Naive thymus-derived CD4-positive, alpha-beta T cell (primary cell): ENCODE measurements at regions of chr2 and their contacts with region 1.

Region 1: DNA sequence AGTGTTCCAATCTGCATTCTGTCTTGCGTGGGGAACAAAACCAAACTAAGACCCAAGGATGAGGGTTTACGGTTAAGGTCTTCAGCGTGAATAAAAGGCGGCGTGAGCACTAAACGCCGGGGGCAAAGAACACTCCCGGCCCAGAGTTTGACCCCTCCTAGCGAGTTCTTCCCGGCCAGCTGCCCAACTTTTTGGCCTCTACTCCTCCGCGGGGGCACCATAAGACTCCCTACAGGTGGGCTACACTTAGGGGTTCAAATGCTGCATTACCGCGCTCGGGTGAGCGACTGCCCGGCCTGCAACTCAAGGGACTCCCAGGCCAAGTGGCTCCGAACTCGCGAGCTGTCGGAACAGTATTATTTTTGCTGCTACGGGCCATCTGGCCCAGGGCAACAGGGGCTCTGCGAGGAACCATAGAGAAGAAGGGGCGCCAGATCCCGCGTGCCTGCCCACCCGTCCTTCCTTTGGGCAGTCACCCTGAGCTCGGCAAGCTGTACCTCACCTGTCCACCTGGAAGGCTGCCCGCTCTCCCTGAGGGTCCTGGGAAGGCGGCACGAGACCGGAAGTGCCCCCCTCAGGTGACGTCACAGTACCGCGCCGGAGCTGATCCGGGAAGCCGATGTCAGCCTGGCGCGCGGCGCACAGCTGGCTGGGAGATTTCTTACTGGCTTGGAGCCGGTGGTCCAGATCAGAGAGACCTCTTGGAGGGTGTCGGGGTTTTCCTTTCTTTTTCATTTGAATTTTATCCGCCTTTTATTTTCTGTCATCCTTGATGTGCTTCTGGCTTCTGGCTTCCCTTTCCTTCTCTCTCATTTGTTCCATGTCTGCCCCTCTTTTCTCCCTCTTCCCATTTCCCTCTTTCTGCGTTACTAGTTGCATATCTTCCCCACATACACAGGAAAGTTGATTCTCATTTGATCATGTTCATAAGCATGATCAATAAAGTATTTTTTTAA is at the start of gene LDAH:
- DNase-seq: peak; percentile 71 to 84 (median 81)
- ATAC-seq: peak; percentile 91
- H3K4me3 ChIP-seq: peak within 1 kb of the TSS; percentile 98
- H3K4me3 Mint-ChIP-seq: peak within 1 kb of the TSS; percentile 93 to 99 (median 97)
- H3K27ac ChIP-seq: peak within 1 kb of the TSS; percentile 86
- H3K27ac Mint-ChIP-seq: peak within 1 kb of the TSS; percentile 95 to 99 (median 98)
- H3K4me1 ChIP-seq: no peaks in the 10 kb centered on the region
- H3K4me1 Mint-ChIP-seq: peaks cover 7 to 45% (median 25%) of the 10 kb centered on the region in 7 donors
- H3K27me3 ChIP-seq: no peaks in the 10 kb centered on the region
- H3K27me3 Mint-ChIP-seq: peaks cover 0 to 2% (median 0%) of the 10 kb centered on the region in 5 donors
- total RNA-seq, gene LDAH: 11.1 to 29.8 (median 18.4) TPM

Region 2: DNA sequence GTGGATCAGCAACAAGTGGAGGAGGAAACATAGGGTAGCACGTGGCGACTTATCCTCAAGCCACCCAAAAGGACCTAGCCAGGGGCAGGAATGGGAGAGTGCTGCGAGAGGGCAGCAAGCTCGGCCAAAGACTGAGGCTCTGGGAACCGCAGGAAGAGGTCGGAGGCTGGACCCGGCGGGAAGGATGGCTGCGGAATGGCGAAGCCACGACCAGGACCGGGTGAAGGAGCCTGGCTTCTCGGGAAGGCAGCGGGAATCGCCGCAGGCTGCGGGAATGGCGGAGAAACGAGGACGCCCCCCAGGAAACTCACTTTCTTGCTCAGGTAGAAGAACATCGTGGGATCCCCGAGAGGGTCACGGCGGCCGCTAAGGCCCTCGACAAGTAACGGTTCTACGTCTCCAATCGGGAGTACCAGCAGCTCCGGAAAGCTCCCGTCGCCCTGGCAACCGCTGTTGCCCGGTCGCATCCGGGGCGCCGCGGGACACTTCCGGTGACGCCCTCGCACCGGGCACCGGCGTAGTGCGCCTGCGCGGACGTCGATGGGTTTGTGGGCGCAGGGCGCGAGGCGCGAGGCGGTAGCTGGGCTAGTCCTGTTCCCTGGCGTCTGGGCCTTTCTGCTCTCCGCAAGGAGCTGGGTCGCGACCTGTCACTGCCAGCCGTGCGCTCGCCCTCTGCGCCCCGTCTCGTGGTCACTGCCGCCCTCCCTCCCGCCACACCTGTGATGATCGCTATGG is 833.0 kb before region 1 on chr2 and contains the start of gene WDR35:
- CTCF ChIA-PET with region 1: no interaction called
- POLR2A ChIA-PET with region 1: no interaction called
- intact Hi-C with region 1: loop called in 1 of 2 experiments (anchors 5 kb)
- DNase-seq: peak; percentile 78 to 99 (median 86)
- ATAC-seq: peak; percentile 95
- H3K4me3 ChIP-seq: peak within 1 kb of the TSS; percentile 91
- H3K4me3 Mint-ChIP-seq: peak within 1 kb of the TSS; percentile 88 to 94 (median 89)
- H3K27ac ChIP-seq: peak within 1 kb of the TSS; percentile 68
- H3K27ac Mint-ChIP-seq: peak within 1 kb of the TSS; percentile 86 to 94 (median 89)
- H3K4me1 ChIP-seq: peaks cover 0 to 14% of the 10 kb centered on the region in 2 donors
- H3K4me1 Mint-ChIP-seq: peaks cover 11 to 33% (median 23%) of the 10 kb centered on the region in 7 donors
- H3K27me3 ChIP-seq: peaks cover 0 to 4% of the 10 kb centered on the region in 2 donors
- H3K27me3 Mint-ChIP-seq: peaks cover 7 to 30% (median 12%) of the 10 kb centered on the region in 5 donors
- total RNA-seq, gene WDR35: 3.2 to 6.0 (median 3.7) TPM

Region 3: GRCh38 chr2:20666304-20667150 is 156.3 kb before region 1 on chr2 and contains the start of gene GDF7:
- CTCF ChIA-PET with region 1: no interaction called
- POLR2A ChIA-PET with region 1: no interaction called
- intact Hi-C with region 1: loop called in 1 of 2 experiments (anchors 5 kb)
- DNase-seq: peak in 2 of 9 donors; percentile 26 to 46
- ATAC-seq: peak; percentile 32
- H3K4me3 ChIP-seq: peak within 1 kb of the TSS; percentile 46
- H3K4me3 Mint-ChIP-seq: peak within 1 kb of the TSS; percentile 78 to 91 (median 84)
- H3K27ac ChIP-seq: no peak within 1 kb of the TSS
- H3K27ac Mint-ChIP-seq: no peak within 1 kb of the TSS
- H3K4me1 ChIP-seq: peaks cover 0 to 6% of the 10 kb centered on the region in 2 donors
- H3K4me1 Mint-ChIP-seq: peaks cover 6 to 32% (median 15%) of the 10 kb centered on the region in 7 donors
- H3K27me3 ChIP-seq: peaks cover 10 to 21% of the 10 kb centered on the region in 2 donors
- H3K27me3 Mint-ChIP-seq: peaks cover 47 to 74% (median 65%) of the 10 kb centered on the region in 5 donors
- total RNA-seq, gene GDF7: 0.03 to 0.20 (median 0.05) TPM in 3 of 5 experiments, not detected in the others

Region 4: DNA sequence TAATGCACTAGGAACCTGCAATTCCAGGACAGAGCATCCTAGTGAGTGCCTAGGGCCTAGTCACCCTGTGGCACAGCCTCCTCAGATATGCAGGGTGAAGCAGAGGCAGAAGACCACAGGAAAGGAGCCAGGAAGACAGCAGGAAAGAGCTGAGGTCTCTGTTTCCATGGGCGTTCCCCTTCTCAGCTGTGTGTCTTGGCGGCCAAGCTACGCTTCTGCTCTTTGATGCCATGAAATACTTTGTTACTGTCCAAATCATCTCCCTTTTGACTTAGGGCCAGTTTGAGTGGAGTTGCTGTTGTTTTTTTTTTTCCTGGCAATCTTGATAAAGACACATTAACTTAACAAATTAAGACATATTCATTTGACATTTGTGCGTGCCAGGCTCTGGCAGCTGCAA is 153.7 kb after region 1 on chr2:
- CTCF ChIA-PET with region 1: no interaction called
- POLR2A ChIA-PET with region 1: no interaction called
- intact Hi-C with region 1: no loop called
- DNase-seq: no peak
- ATAC-seq: no peak
- H3K4me3 ChIP-seq: no peak overlapping the region
- H3K4me3 Mint-ChIP-seq: no peak overlapping the region
- H3K27ac ChIP-seq: no peak overlapping the region
- H3K27ac Mint-ChIP-seq: no peak overlapping the region
- H3K4me1 ChIP-seq: no peaks in the 10 kb centered on the region
- H3K4me1 Mint-ChIP-seq: no peaks in the 10 kb centered on the region
- H3K27me3 ChIP-seq: no peaks in the 10 kb centered on the region
- H3K27me3 Mint-ChIP-seq: peaks cover 0 to 11% (median 4%) of the 10 kb centered on the region in 5 donors